Left cardiac atrium (tissue), 4 donors: ENCODE measurements at regions of chr4 and their contacts with region 1.

Region 1: GRCh38 chr4:70651864-70652506 is 14.3 kb downstream of the JCHAIN start:
- DNase-seq: no peak
- ATAC-seq: peak; percentile 19 to 55

Region 2: DNA sequence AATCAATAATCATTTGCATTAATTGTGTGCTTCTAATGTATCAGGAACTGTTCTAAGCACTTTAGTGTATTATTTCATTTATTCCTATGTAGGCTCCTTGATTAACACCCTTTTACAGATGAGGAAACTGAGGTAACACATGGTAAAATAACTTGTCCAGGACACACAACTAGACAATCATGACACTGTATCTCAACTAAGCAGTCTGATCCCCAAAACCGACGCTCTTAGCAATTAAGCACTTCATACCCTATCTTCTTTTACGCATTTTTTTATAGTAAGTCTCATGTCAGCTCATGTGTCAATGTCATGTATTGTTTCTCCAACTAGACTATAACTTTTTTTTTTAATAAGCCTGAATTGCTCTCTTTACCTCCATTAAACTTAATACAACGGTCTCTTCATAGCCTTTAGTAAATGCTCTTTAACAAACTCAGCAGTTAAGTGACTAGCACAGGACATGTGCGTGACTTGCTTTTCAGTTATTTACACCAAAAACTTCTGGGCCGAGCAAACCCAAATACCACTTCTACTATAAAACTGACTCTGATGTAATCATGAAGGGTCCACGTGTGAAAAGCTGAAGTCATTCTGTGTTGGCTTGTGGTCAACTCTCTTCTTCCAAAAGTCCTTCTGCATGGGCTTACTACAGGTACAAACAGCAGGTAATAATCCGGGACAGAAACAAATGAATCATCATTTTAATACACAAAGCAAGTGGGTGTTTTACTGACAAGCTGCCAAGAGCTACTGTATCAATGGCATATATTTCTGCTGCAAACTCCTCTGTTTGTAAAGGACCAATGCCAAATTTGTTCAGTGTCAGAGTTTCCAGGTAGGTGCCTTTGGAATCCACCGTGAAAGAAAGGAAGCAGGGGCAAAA is 67.8 kb before region 1 on chr4:
- intact Hi-C with region 1: no loop called
- DNase-seq: no peak
- ATAC-seq: no peak

Region 3: DNA sequence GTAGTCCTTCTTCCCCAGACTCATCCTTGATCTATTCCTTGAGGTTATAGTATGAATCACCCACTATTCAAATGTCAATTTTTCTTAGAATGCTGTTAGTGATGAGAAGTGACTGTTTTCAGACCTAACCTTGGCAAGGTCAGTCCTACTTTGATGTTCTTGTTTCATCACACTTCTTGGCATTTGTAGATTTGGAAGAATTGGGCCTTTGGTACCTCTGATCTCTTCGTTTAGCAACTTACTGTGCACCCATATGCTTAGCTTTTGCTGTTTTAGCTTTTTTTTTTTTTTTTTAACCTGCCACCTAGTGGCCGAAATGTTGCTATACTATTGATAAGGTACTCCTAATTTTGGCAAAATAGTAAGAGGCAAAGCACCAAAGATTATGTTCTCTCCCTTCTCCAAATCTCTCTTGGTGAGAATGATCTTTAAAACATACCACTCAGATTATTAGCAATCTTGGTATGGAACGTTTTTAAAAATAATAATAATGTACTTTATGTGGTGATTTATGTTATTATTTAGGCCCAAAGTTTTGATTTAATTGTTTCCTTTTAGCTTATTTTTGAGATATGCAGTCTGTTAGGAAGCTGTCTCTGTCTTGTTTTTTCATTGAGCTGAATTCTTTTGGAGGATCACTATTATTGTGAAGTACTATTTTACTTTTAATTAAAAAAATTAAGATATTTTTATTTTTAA is 358.1 kb after region 1 on chr4:
- intact Hi-C with region 1: loop called in 1 of 2 experiments (anchors 5 kb)
- DNase-seq: no peak
- ATAC-seq: peak; percentile 47 to 58